ENCODE measurements at regions of chr4 and their contacts with region 1.

Region 1: DNA sequence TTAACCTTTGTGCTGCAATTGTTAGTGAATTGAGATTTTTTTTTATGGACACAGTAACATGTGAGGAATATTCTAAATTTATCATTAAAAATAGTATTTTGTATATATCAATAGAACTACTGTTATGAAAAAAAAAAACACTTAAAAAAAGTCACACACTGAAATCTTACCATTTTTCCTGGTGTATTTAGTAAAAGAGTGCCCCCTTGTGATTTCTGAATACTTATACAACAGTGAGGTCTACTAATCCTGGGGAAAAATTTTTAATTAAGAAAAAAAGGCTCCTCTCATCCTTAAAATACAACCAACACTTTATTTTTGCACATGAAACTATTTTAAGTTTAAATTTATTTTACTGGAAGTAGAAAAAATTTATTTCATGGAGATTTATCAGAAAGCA is 56.4 kb upstream of the SPOCK3 start:
- DNase-seq: no peak
- H3K4me3 ChIP-seq: no peak overlapping the region
- H3K27ac ChIP-seq: no peak overlapping the region
- H3K4me1 ChIP-seq: no peaks in the 10 kb centered on the region
- H3K27me3 ChIP-seq: no peaks in the 10 kb centered on the region
- CTCF ChIP-seq: peak; percentile 55

Region 2: GRCh38 chr4:165493359-165493758 is 1797.3 kb before region 1 on chr4:
- CTCF ChIA-PET with region 1: no interaction called
- POLR2A ChIA-PET with region 1: no interaction called
- intact Hi-C with region 1: loop called (anchors 5 kb)
- DNase-seq: peak in 1 of 2 experiments; percentile 70
- H3K4me3 ChIP-seq: no peak overlapping the region
- H3K27ac ChIP-seq: no peak overlapping the region
- H3K4me1 ChIP-seq: no peaks in the 10 kb centered on the region
- H3K27me3 ChIP-seq: no peaks in the 10 kb centered on the region
- CTCF ChIP-seq: peak; percentile 76

Region 3: GRCh38 chr4:166882221-166882620 is 408.5 kb before region 1 on chr4:
- CTCF ChIA-PET with region 1: no interaction called
- POLR2A ChIA-PET with region 1: no interaction called
- intact Hi-C with region 1: no loop called
- DNase-seq: no peak
- H3K4me3 ChIP-seq: no peak overlapping the region
- H3K27ac ChIP-seq: no peak overlapping the region
- H3K4me1 ChIP-seq: no peaks in the 10 kb centered on the region
- H3K27me3 ChIP-seq: no peaks in the 10 kb centered on the region
- CTCF ChIP-seq: no peak

Region 4: DNA sequence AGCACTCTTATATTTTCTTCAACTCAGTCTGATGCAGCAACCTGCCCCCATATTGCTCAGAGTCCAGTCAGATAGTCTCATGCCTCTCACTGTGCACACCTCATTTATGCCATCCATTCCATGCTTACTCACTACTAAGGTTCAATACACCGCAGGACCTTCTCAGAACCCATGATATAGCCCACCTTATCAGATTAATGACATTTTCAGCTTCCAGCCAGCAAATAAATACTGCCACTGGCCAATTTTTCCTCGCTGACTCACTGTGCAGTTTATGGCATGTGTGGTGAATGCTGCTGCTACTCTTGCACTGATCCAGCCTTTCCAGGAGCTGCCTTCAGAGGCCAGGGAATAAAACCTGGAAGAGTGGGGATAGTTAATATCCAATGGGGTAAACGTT is 324.2 kb after region 1 on chr4:
- CTCF ChIA-PET with region 1: no interaction called
- POLR2A ChIA-PET with region 1: no interaction called
- intact Hi-C with region 1: loop called (anchors 10 kb)
- DNase-seq: no peak
- H3K4me3 ChIP-seq: no peak overlapping the region
- H3K27ac ChIP-seq: no peak overlapping the region
- H3K4me1 ChIP-seq: no peaks in the 10 kb centered on the region
- H3K27me3 ChIP-seq: no peaks in the 10 kb centered on the region
- CTCF ChIP-seq: no peak

Region 5: DNA sequence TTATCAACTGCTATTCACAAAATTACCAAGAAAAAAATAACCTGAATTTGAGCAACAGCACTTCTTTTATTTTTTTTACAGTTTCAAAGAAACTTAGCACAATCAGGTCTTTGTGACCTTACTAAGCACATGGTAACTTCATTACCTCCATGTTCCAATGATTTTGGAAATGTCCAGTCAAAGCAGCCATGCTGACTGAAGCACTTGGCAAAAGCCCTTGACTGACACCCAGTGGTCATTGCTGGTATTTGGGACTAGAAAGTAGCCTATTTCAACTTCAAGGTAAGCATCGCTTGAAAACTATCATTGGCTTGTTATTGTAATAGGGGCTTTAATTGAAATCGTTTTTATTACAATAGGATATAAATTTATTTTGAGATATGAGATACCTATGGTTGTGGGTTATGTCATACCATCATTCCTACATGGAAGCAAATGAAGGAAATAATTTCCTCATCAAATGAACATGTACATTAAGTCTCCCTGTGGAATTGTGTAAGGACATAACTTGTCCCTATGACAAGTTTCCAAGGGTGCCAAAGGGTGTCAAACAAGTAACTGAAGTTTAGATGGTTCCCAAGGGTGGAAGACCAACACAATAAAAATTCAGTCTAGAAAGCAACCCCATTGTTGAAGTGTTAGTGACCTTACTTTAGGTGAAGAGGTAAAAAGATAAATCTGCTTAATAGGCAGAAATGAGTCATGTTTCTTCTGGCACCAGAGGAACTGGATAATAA is 786.5 kb after region 1 on chr4:
- CTCF ChIA-PET with region 1: no interaction called
- POLR2A ChIA-PET with region 1: no interaction called
- intact Hi-C with region 1: loop called (anchors 10 kb)
- DNase-seq: peak; percentile 34 to 49
- H3K4me3 ChIP-seq: no peak overlapping the region
- H3K27ac ChIP-seq: no peak overlapping the region
- H3K4me1 ChIP-seq: no peaks in the 10 kb centered on the region
- H3K27me3 ChIP-seq: no peaks in the 10 kb centered on the region
- CTCF ChIP-seq: peak; percentile 84